ENCODE measurements at regions of chr6 and their contacts with region 1.

Region 1: DNA sequence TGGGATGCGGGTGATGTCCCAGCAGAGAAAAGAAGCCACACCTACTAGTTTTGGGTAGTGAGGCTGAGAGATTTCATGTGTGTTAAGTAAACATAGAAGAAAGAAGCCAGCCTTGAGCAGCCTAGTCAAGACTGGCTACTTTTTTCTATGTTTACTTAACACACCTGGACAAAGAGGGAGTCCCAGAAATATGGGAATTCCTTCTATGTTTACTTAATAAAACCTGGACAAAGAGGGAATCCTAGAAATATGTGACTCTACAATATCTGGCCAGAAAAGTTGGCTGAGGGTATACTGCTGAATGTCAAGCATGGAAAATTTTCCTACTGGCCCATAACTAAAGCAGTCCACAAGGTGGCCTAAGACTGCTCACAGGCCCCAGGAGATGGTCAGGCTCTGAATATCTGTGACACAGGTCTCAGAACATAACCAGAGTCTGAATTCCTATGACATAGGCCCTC is 578.3 kb upstream of the NRSN1 start:
- DNase-seq: peak; percentile 3
- ATAC-seq: peak; percentile 91
- H3K4me3 ChIP-seq: no peak overlapping the region
- H3K27ac ChIP-seq: no peak overlapping the region
- H3K4me1 ChIP-seq: no peaks in the 10 kb centered on the region
- H3K27me3 ChIP-seq: no peaks in the 10 kb centered on the region
- CTCF ChIP-seq: peak; percentile 41
- EP300 ChIP-seq: no peak
- POLR2A ChIP-seq: no peak
- RAD21 ChIP-seq: no peak

Region 2: GRCh38 chr6:23522792-23523547 is 24.8 kb before region 1 on chr6:
- CTCF ChIA-PET with region 1: no interaction called
- POLR2A ChIA-PET with region 1: no interaction called
- in situ Hi-C with region 1: no loop called
- intact Hi-C with region 1: no loop called
- DNase-seq: no peak
- ATAC-seq: no peak
- H3K4me3 ChIP-seq: no peak overlapping the region
- H3K27ac ChIP-seq: no peak overlapping the region
- H3K4me1 ChIP-seq: no peaks in the 10 kb centered on the region
- H3K27me3 ChIP-seq: no peaks in the 10 kb centered on the region
- CTCF ChIP-seq: no peak
- EP300 ChIP-seq: no peak
- POLR2A ChIP-seq: no peak
- RAD21 ChIP-seq: no peak

Region 3: GRCh38 chr6:23659125-23659524 is 111.4 kb after region 1 on chr6:
- CTCF ChIA-PET with region 1: no interaction called
- POLR2A ChIA-PET with region 1: no interaction called
- in situ Hi-C with region 1: no loop called
- intact Hi-C with region 1: loop called (anchors 1 kb)
- DNase-seq: peak; percentile 16
- ATAC-seq: peak; percentile 90
- H3K4me3 ChIP-seq: no peak overlapping the region
- H3K27ac ChIP-seq: no peak overlapping the region
- H3K4me1 ChIP-seq: peaks cover 4% of the 10 kb centered on the region; the same call in 1 of the 2 replicates
- H3K27me3 ChIP-seq: no peaks in the 10 kb centered on the region
- CTCF ChIP-seq: peak; percentile 72
- EP300 ChIP-seq: no peak
- POLR2A ChIP-seq: no peak
- RAD21 ChIP-seq: no peak